ENCODE measurements at regions of chr16 and their contacts with region 1.

Region 1: DNA sequence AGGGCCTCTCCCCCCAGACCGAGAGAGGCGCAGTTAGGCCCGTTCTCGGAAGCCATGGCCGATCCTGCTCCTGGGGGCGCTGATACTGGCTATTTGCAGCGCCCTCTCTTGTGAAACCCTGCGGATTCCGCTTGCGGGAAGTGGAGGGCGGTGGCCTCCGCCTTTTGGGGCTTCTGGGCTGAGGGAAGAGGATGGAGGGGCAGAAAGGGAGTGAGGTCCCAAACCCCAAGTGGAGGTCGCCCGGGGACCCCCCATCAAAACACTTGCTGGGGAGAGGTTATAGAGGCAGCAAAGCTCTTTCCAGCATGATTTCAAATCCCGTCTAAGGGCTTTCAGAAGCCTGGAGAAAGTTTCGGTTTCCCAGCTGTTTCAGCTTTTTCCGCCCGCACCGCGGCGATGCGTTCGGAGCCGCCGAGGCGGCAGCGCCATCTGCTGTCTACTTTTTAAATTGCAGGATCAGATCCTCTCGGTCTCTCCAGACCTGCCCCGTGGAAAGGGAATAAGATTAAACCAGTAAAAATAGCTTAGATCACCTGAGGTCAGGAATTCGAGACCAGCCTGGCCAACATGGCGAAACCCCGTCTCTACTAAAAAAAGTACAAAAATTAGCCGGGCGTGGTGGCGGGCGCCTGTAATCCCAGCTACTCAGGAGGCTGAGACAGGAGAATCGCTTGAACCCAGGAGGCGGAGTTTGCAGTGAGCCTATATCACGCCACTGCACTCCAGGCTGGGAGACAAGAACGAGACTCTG is 15.8 kb downstream of the SNX20 start:
- DNase-seq: peak; percentile 41 to 99
- H3K4me3 ChIP-seq: peak overlapping the region; percentile 11 to 58 (median 55); a peak in 7 of 8 replicates
- H3K27ac ChIP-seq: no peak overlapping the region
- H3K4me1 ChIP-seq: peaks cover 0 to 2% (median 0%) of the 10 kb centered on the region in 4 experiments; a peak in 1 of 7 replicates
- H3K27me3 ChIP-seq: 0 out of 7 replicates have a peak, but pooled peaks cover 0 to 3% (median 0%) of the 10 kb centered on the region in 4 experiments
- CTCF ChIP-seq: peak; percentile 73 to 90 (median 75)
- EP300 ChIP-seq: no peak; a peak in 1 of 3 replicates
- POLR2A ChIP-seq: no peak
- RAD21 ChIP-seq: peak; percentile 89 to 93

Region 2: DNA sequence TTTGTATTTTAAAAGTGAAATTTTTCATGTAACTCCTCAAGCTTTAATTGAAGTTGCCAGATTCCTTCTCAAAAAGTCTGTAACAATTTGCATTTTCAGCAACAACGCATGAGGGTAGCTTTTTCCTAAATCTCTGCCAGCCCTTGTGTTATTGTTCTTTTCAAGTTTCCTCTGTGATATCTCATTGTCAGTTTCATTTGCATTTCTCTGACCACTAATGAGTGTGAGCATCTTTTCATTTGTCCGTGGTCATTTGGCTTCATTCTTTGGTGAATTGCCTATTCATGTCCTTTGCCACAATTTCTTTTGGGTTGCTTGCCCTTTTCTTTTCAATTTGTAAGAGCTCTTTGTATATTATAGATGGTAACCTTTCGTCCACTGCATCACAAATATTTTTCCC is 185.1 kb before region 1 on chr16:
- CTCF ChIA-PET with region 1: no interaction called
- POLR2A ChIA-PET with region 1: no interaction called
- DNase-seq: no peak
- H3K4me3 ChIP-seq: no peak overlapping the region
- H3K27ac ChIP-seq: no peak overlapping the region
- H3K4me1 ChIP-seq: peaks cover 0 to 6% (median 0%) of the 10 kb centered on the region in 4 experiments; a peak in 3 of 7 replicates
- H3K27me3 ChIP-seq: no peaks in the 10 kb centered on the region
- CTCF ChIP-seq: no peak
- EP300 ChIP-seq: no peak
- POLR2A ChIP-seq: no peak
- RAD21 ChIP-seq: no peak

Region 3: DNA sequence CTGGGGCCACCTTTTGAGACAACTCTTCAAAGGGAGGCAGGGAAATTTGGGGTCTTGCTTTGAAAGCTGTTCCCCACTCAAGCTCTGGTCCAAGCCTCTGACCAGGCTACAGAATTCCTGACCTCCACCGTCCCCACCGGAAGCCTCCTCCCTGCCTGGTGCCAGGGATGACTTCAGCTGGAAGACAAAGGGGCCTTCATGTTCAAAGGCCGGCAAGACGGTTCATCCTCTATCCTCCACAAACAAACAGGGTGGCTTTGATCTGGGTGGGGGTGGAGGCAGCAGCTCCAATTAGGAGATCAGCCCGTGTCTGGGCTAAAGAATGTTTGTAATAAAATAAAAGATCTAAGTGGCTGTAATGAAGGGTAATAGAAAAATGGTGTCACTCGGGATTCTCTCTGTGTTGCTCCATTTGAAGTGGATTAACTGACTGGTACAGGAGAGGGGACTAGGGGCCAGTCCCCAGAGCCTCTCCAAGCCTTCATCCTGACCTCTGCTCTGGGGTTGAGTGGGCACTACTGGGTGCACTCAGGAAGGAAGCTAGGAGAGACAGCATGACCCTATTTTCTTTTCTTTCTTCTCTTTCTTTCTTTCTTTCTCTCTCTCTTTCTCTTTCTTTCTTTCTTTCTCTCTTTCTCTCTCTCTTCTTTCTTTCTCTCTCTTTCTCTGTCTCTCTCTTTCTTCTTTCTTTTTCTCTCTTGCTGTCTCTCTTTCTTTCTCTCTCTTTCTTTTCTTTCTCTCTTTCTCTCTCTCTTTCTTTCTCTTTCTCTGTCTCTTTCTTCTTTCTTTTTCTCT is 144.7 kb before region 1 on chr16:
- CTCF ChIA-PET with region 1: interaction called, 17 read pairs
- POLR2A ChIA-PET with region 1: no interaction called
- DNase-seq: no peak
- H3K4me3 ChIP-seq: no peak overlapping the region
- H3K27ac ChIP-seq: no peak overlapping the region
- H3K4me1 ChIP-seq: peaks cover 0 to 2% (median 0%) of the 10 kb centered on the region in 4 experiments; a peak in 1 of 7 replicates
- H3K27me3 ChIP-seq: no peaks in the 10 kb centered on the region
- CTCF ChIP-seq: no peak
- EP300 ChIP-seq: no peak
- POLR2A ChIP-seq: no peak
- RAD21 ChIP-seq: no peak

Region 4: GRCh38 chr16:50593410-50594150 is 71.7 kb before region 1 on chr16:
- CTCF ChIA-PET with region 1: interaction called, 279 read pairs
- POLR2A ChIA-PET with region 1: interaction called, 6 read pairs
- DNase-seq: peak; percentile 23 to 70
- H3K4me3 ChIP-seq: no peak overlapping the region
- H3K27ac ChIP-seq: no peak overlapping the region
- H3K4me1 ChIP-seq: peaks cover 0 to 19% (median 10%) of the 10 kb centered on the region in 4 experiments; a peak in 6 of 7 replicates
- H3K27me3 ChIP-seq: no peaks in the 10 kb centered on the region; a peak in 1 of 7 replicates
- CTCF ChIP-seq: peak; percentile 55 to 82 (median 69)
- EP300 ChIP-seq: no peak
- POLR2A ChIP-seq: no peak; a peak in 1 of 3 replicates
- RAD21 ChIP-seq: peak; percentile 78 to 85

Region 5: DNA sequence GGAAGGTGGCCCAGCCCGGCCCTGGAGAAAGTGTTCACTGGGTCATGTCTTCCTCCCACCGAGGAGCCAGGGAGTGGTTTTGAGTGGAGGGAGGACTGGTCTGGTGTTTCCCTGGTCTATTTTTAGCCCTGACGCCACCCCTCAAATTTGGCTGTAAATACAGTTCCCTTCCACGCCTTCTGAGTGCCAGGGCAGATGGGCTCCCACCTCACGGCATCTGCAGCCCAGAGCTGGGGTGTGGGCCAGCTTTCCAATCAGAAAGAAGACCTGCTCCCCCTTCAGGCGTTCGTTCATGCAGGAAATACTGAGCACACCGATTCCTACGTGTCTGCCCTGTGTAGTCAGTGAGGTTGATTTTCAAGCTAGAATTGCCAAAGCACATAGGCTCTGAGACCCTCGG is 37.9 kb before region 1 on chr16:
- CTCF ChIA-PET with region 1: interaction called, 11 read pairs
- POLR2A ChIA-PET with region 1: no interaction called
- DNase-seq: peak in 1 of 2 experiments; percentile 58
- H3K4me3 ChIP-seq: no peak overlapping the region
- H3K27ac ChIP-seq: no peak overlapping the region
- H3K4me1 ChIP-seq: no peaks in the 10 kb centered on the region
- H3K27me3 ChIP-seq: no peaks in the 10 kb centered on the region
- CTCF ChIP-seq: peak; percentile 24 to 48 (median 33)
- EP300 ChIP-seq: no peak
- POLR2A ChIP-seq: no peak
- RAD21 ChIP-seq: peak; percentile 35 to 41; a peak in 3 of 4 replicates

Region 6: DNA sequence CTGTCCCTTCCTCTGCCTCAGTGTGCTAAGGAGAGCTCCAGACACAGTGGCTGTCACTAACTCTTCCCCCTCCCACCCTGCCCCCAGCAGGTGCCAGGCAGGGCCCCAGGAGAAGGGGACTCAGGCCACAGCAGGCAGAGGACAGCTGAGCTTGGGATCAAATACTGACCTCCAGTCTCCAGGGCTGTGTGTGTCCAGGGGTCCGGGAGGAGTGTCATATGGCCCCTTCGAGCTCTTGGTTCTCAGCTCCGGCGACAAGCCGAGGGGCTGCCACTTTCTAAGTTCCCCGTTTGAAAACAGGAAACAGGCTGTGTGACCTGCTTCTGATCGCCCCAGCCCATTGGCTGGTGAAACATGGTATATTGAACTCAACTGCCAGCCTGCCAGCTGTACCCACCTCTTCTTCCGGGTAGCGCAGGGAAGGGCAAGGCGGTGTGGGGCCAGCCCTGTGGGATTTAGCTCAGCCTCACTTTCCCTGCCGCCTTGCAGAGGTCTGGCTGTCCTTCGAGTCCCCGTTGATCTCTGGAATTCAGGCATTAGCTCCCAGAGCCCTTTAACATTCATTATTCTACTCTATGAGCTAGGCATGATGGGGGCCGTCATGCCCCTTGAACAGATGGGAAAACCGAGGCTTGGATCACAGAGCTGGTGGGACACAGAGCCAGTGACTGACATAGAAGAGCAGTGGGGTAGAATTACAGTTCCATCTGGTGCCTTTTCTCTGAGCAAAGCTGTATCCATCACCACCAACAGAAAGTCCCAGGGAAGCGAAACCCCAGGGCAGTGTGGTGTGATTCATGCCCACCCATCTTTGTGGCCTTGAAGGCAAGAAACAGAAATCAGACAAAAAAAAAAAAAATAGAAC is 15.9 kb after region 1 on chr16 and contains the start of gene SNX20:
- CTCF ChIA-PET with region 1: interaction called, 142 read pairs
- POLR2A ChIA-PET with region 1: interaction called, 3 read pairs
- DNase-seq: no peak
- H3K4me3 ChIP-seq: no peak within 1 kb of the TSS
- H3K27ac ChIP-seq: no peak within 1 kb of the TSS
- H3K4me1 ChIP-seq: no peaks in the 10 kb centered on the region
- H3K27me3 ChIP-seq: no peaks in the 10 kb centered on the region
- CTCF ChIP-seq: no peak
- EP300 ChIP-seq: no peak
- POLR2A ChIP-seq: no peak
- RAD21 ChIP-seq: no peak
- total RNA-seq, gene SNX20: not detected in 2 replicates

Region 7: DNA sequence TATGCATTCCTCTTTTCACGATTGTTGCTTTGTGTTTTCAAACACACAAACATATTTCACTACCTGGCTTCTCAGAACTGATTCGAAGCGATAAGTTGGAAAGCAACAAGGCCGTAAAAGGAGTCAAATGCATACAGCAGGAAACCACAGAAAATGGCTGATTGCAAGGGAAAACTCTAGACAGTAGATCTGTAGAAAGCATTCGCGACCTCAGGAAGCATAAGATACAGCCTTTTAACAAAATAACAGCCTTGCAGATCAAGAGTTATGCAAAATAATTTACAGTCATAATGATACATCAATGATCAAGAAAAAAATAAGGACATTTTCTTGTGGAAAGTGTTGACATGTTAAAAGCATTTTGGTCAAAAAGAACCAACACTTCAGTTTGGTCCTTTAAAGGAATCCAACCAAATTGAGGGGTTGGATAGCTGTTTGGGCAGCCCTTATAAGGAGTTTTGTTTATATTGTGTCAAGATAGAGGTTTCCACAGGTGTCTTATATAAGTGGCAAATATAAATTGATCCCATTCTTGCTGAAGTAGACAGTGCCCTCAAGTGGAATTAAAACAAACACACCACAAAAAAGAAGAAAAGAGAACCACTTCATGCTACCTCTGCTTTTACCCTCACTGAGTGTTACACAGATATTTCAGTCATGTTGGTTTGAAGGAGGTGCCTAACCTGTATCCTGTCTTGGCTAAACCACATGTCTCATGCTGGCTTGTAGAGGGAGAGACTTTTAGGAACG is 82.1 kb after region 1 on chr16:
- CTCF ChIA-PET with region 1: interaction called, 42 read pairs
- POLR2A ChIA-PET with region 1: no interaction called
- DNase-seq: no peak
- H3K4me3 ChIP-seq: no peak overlapping the region
- H3K27ac ChIP-seq: no peak overlapping the region
- H3K4me1 ChIP-seq: peaks cover 0 to 8% (median 5%) of the 10 kb centered on the region in 4 experiments; a peak in 3 of 7 replicates
- H3K27me3 ChIP-seq: no peaks in the 10 kb centered on the region
- CTCF ChIP-seq: peak in 1 of 3 experiments; percentile 25; a peak in 2 of 4 replicates
- EP300 ChIP-seq: no peak
- POLR2A ChIP-seq: no peak
- RAD21 ChIP-seq: peak; percentile 54

Region 8: DNA sequence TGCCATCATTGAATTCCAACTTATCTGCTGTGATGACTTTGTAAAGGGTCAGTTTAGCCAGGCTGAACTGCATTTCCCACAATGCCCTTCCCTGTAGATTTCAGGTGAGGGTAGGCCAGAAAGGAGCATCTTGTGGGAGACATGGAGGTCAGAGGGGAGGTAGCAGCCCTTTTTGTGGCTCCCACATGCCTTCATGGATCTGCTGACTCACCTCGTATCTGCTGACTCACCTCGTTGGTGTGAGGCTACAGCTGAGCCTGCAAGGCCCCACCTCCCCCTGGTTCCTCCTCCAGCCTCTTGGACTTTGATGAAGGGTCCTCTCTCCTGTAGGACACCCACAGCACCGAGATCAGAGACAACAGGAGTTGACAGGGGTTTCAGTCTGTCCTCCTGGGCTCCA is 383.2 kb after region 1 on chr16:
- CTCF ChIA-PET with region 1: interaction called, 10 read pairs
- POLR2A ChIA-PET with region 1: no interaction called
- DNase-seq: no peak
- H3K4me3 ChIP-seq: no peak overlapping the region
- H3K27ac ChIP-seq: no peak overlapping the region
- H3K4me1 ChIP-seq: peaks cover 0 to 3% (median 0%) of the 10 kb centered on the region in 4 experiments; a peak in 1 of 7 replicates
- H3K27me3 ChIP-seq: 0 out of 7 replicates have a peak, but pooled peaks cover 0 to 3% (median 0%) of the 10 kb centered on the region in 4 experiments
- CTCF ChIP-seq: no peak
- EP300 ChIP-seq: no peak
- POLR2A ChIP-seq: no peak
- RAD21 ChIP-seq: no peak

Measured in H1 (cell line).